ENCODE measurements at regions of chr1 and their contacts with region 1.

Region 1: GRCh38 chr1:10032590-10033358 is at the start of gene UBE4B:
- DNase-seq: peak; percentile 99
- ATAC-seq: peak; percentile 99
- total RNA-seq, gene UBE4B: 74.3 TPM

Region 2: GRCh38 chr1:9946315-9946714 is 86.5 kb before region 1 on chr1:
- intact Hi-C with region 1: loop called (anchors 5 kb)
- DNase-seq: no peak
- ATAC-seq: no peak

Measured in Right ventricle myocardium superior (tissue), 1 donor.